HAP-1 (cell line): ENCODE measurements at regions of chr6 and their contacts with region 1.

Region 1: GRCh38 chr6:166956444-166957086 is at the start of gene RNASET2:
- DNase-seq: peak; percentile 64 to 99
- H3K4me3 ChIP-seq: peak within 1 kb of the TSS; percentile 74
- H3K4me1 ChIP-seq: peaks cover 13% of the 10 kb centered on the region
- H3K27me3 ChIP-seq: no peaks in the 10 kb centered on the region

Region 2: GRCh38 chr6:166770216-166771116 is 186.1 kb before region 1 on chr6:
- in situ Hi-C with region 1: no loop called
- DNase-seq: no peak
- H3K4me3 ChIP-seq: no peak overlapping the region
- H3K4me1 ChIP-seq: no peaks in the 10 kb centered on the region
- H3K27me3 ChIP-seq: no peaks in the 10 kb centered on the region

Region 3: DNA sequence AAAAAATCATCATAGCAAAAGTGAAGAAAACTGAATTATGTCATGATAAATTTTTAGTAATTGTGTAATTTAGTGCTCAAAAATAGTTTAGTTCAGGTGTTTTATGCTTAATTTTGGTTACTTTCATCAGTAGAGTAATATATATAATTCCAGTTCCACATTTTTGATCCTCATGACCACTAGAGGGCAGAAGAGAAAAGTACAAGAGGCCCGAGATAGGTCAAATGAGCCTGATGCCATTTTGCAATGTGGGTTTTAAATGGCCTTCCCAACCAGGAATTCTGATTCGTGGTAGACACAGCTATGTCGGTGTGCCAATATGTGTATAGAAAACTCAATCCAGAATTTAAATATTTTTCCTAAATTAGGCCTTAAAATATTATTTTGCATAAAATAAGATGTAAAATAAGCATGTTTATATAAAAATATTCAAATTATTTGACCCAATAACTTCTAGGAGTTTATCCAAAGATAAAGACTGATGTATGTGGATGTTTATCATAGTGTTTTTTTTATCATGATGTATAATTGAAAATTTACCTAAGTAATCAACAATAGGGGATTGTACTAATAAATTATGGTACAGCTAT is 169.8 kb before region 1 on chr6:
- in situ Hi-C with region 1: loop called (anchors 10 kb)
- DNase-seq: peak; percentile 43 to 50
- H3K4me3 ChIP-seq: no peak overlapping the region
- H3K4me1 ChIP-seq: no peaks in the 10 kb centered on the region
- H3K27me3 ChIP-seq: no peaks in the 10 kb centered on the region

Region 4: DNA sequence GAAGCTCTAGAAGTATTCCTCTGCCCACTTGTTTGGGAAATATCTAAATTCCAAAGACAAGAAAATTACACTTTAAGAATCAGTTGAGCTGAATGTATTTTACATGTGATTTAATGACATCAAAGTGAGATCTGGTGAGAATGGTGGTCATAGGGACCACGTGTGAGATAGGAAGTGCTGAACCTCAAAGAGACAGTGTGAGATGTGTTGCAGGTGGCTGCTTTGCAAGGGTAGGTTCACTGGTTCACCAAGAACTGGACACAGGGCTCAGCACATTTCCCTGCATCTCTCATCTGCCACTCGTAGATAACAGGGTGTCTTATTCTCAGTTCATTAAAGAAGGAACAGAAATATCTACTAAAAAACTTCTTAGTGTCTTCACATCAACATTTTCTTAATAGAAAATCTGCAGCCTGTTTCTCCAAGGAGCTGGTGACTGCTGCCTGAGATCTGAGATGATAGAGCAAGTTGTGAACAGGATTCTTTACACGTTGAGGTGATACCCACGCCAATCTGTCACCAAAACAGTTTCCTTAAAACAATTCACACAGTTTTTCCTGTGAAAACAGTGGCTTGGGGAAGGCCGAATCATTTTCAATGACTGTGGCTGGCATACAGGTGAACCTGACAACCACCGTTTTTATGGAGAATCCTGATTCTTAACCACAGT is 173.6 kb after region 1 on chr6:
- in situ Hi-C with region 1: no loop called
- DNase-seq: no peak
- H3K4me3 ChIP-seq: no peak overlapping the region
- H3K4me1 ChIP-seq: no peaks in the 10 kb centered on the region
- H3K27me3 ChIP-seq: no peaks in the 10 kb centered on the region